Activated CD4-positive, alpha-beta T cell treated with anti-CD3 and anti-CD28 coated beads for 36 hours (primary cell): ENCODE measurements at regions of chr19 and their contacts with region 1.

Region 1: DNA sequence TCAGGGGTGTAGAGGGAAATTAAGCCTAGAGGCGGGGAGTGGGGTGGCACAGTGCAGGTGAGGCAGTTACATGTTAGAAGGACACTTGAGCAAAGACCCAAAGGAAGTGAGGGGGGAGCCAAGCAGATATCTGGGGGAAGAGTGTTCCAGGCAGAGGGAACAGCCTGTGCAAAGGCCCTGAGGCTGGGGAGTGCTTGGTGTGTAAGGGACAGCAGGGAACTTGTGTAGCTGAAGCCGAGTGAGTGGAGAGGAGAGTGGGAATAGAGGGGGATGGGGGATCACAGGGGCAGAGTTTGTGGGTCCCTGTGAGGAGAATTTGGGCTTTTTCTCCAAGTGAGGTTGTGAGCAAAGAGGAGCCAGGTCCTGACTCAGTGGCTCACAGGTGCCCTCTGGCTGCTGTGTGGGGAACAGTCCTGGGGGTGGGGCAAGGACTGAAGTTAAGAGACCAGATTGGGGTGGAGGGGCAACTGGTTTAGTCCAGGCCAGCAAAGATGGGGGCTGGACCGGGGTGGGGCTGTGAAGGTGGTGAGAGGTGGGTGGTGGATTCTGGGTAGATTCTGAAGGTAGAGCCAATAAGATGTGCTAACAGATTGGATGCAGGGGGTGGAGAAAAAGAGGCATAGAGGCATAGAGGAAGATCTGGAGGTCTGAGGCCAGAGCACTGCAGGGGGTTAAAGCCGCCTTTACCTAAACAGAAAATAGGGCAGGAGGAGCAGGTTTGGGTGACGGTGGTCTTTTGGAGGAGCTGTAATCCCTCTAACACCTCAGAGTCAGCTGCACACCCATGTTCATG is 75.3 kb downstream of the CACNA1A start:
- DNase-seq: peak; percentile 76
- ATAC-seq: peak; percentile 71
- H3K4me3 Mint-ChIP-seq: no peak overlapping the region
- H3K27ac Mint-ChIP-seq: no peak overlapping the region
- H3K4me1 Mint-ChIP-seq: no peaks in the 10 kb centered on the region
- H3K27me3 Mint-ChIP-seq: peaks cover 10% of the 10 kb centered on the region

Region 2: DNA sequence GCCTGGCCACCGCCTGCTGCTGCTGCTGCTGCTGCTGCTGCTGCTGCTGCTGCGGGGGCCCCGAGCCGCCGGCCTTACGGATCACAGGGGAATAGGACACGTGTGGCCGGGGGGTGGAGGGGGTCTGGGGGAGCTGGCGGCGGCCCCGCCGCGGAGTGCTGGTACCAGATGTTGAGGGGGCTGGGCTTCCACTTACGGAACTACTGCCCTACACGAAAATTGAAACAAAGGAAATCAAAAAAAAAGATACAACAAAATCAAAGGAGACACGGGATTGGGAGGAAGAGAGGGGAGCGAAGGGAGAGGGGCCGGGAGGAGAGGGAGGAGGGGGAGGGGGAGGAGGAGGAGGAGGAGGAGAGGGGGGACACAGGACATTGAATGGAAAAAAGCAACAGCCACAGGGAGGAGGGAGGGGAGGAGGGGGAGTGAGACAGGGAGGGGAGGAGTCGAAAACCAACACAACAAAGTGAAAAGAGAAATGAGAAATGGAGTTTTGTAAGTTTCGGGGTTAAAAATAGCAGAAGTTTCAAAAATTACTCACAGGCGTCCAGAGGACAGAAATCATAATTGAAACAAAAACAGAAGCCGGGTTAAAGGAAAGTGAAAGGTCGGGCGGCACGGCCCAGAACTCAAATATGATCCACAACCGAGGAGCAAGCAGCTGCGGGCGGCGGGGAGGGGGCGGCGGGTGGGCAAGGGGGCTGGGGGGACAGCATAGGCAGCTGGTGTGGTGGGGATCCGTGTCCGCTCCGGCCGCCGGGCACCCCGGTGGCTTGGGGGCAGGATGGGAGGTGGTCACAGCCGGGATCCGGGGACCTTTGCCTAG is 222.9 kb before region 1 on chr19:
- CTCF ChIA-PET with region 1: no interaction called
- POLR2A ChIA-PET with region 1: no interaction called
- intact Hi-C with region 1: no loop called
- DNase-seq: peak; percentile 85
- ATAC-seq: peak; percentile 89
- H3K4me3 Mint-ChIP-seq: peak overlapping the region; percentile 77
- H3K27ac Mint-ChIP-seq: peak overlapping the region; percentile 97
- H3K4me1 Mint-ChIP-seq: peaks cover 21% of the 10 kb centered on the region
- H3K27me3 Mint-ChIP-seq: no peaks in the 10 kb centered on the region

Region 3: GRCh38 chr19:13347367-13347766 is 83.6 kb before region 1 on chr19:
- CTCF ChIA-PET with region 1: no interaction called
- POLR2A ChIA-PET with region 1: no interaction called
- intact Hi-C with region 1: no loop called
- DNase-seq: no peak
- ATAC-seq: no peak
- H3K4me3 Mint-ChIP-seq: no peak overlapping the region
- H3K27ac Mint-ChIP-seq: no peak overlapping the region
- H3K4me1 Mint-ChIP-seq: no peaks in the 10 kb centered on the region
- H3K27me3 Mint-ChIP-seq: peaks cover 12% of the 10 kb centered on the region

Region 4: GRCh38 chr19:13366529-13367143 is 64.3 kb before region 1 on chr19:
- CTCF ChIA-PET with region 1: no interaction called
- POLR2A ChIA-PET with region 1: no interaction called
- intact Hi-C with region 1: loop called in 1 of 2 experiments (anchors 1 kb)
- DNase-seq: no peak
- ATAC-seq: no peak
- H3K4me3 Mint-ChIP-seq: no peak overlapping the region
- H3K27ac Mint-ChIP-seq: no peak overlapping the region
- H3K4me1 Mint-ChIP-seq: no peaks in the 10 kb centered on the region
- H3K27me3 Mint-ChIP-seq: peaks cover 17% of the 10 kb centered on the region